Mammary epithelial cell (primary cell): ENCODE measurements at regions of chr12 and their contacts with region 1.

Region 1: GRCh38 chr12:88854260-88854659 is 274.0 kb upstream of the KITLG start:
- DNase-seq: peak; percentile 90
- H3K4me3 ChIP-seq: no peak overlapping the region
- H3K27ac ChIP-seq: peak overlapping the region; percentile 58
- H3K4me1 ChIP-seq: peaks cover 13% of the 10 kb centered on the region
- H3K27me3 ChIP-seq: no peaks in the 10 kb centered on the region
- CTCF ChIP-seq: no peak

Region 2: GRCh38 chr12:88833641-88834116 is 20.6 kb before region 1 on chr12:
- CTCF ChIA-PET with region 1: no interaction called
- dilution Hi-C with region 1: no loop called
- in situ Hi-C with region 1: no loop called
- intact Hi-C with region 1: loop called (anchors 1 kb)
- DNase-seq: peak; percentile 49
- H3K4me3 ChIP-seq: no peak overlapping the region
- H3K27ac ChIP-seq: no peak overlapping the region
- H3K4me1 ChIP-seq: peaks cover 18% of the 10 kb centered on the region
- H3K27me3 ChIP-seq: no peaks in the 10 kb centered on the region
- CTCF ChIP-seq: no peak

Region 3: GRCh38 chr12:88935856-88936255 is 81.6 kb after region 1 on chr12:
- CTCF ChIA-PET with region 1: no interaction called
- dilution Hi-C with region 1: no loop called
- in situ Hi-C with region 1: no loop called
- intact Hi-C with region 1: no loop called
- DNase-seq: no peak
- H3K4me3 ChIP-seq: no peak overlapping the region
- H3K27ac ChIP-seq: no peak overlapping the region
- H3K4me1 ChIP-seq: peaks cover 26% of the 10 kb centered on the region
- H3K27me3 ChIP-seq: no peaks in the 10 kb centered on the region
- CTCF ChIP-seq: no peak